HEK293 (cell line): ENCODE measurements at regions of chr1 and their contacts with region 1.

Region 1: GRCh38 chr1:29033829-29034466 is 89.8 kb downstream of the TMEM200B start:
- H3K4me3 ChIP-seq: no peak overlapping the region
- H3K27ac ChIP-seq: no peak overlapping the region
- H3K4me1 ChIP-seq: no peaks in the 10 kb centered on the region
- CTCF ChIP-seq: 0 out of 2 replicates have a peak, but pooled peaks have one; percentile 35

Region 2: GRCh38 chr1:28782011-28782410 is 251.9 kb before region 1 on chr1:
- CTCF ChIA-PET with region 1: interaction called, 14 read pairs
- POLR2A ChIA-PET with region 1: no interaction called
- H3K4me3 ChIP-seq: no peak overlapping the region
- H3K27ac ChIP-seq: no peak overlapping the region
- H3K4me1 ChIP-seq: no peaks in the 10 kb centered on the region
- CTCF ChIP-seq: no peak

Region 3: DNA sequence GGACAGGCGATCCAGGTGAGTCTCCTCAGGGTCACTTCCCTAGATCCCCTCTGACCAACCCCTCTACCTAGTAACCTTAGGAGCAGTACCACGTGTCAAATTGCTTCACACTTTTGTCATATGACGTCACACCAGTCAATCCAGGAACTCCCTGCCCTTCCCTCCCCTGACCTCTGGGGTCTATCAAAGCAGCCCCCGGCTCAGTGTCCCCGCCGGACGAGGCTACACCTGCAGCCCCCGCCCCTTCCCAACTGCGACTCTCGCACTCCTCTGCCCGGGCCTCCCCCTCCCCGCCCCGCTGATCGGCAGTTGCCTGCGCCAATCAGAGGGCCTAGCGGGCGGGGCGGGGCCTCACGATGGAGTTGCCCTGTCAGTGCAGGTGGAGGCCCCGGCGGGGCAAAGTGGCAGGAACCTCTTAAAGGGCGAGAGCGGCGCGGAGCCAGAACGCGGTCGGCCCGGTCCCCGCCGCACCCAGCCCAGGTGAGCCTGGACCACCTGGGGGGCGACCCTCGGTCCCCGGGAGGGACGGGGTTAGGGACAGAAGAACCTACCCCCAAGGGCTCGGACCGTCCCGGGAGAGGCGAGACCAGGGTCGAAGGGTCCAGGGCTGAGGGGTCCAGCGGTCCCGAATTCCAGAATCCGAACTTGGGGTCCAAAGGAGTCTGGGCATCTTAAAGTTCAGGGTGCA is 147.1 kb before region 1 on chr1:
- CTCF ChIA-PET with region 1: interaction called, 348 read pairs
- POLR2A ChIA-PET with region 1: interaction called, 4 read pairs
- H3K4me3 ChIP-seq: peak overlapping the region; percentile 89
- H3K27ac ChIP-seq: peak overlapping the region; percentile 66; the same call in 1 of the 2 replicates
- H3K4me1 ChIP-seq: peaks cover 6% of the 10 kb centered on the region
- CTCF ChIP-seq: no peak

Region 4: DNA sequence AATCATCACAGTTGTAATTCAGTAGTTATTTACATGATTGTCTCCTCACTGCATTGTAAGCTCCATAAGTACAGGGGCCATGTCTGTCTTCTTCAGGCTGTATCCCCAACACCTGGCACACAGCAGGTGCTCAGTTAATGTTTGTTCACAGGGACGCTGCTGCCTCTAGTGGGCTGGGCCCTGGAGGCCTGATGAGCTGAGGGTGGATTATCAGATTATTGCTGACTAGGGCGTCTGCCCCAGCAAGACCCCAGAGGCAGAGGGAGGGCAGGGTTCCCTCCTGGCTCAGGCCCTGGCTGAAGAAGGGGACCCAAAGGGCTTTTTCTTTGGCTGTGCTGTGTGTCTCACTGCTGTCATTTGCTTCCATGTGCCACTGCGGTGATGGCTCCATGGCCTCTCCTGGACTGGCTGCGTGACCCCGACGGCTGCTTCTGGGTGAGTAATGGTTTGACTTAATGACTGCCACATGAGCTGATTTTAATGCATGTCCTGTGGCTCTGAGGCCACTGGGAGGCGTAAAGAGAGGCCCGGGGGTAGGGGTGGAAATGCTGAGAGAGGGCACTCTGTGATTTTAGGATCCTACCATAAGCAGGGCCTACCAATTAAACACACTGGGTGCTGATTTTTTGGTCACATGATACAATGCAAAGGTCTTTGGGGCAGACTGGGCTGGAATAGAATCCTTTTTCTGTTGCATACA is 140.4 kb before region 1 on chr1:
- CTCF ChIA-PET with region 1: interaction called, 29 read pairs
- POLR2A ChIA-PET with region 1: no interaction called
- H3K4me3 ChIP-seq: no peak overlapping the region
- H3K27ac ChIP-seq: no peak overlapping the region
- H3K4me1 ChIP-seq: no peaks in the 10 kb centered on the region
- CTCF ChIP-seq: peak; percentile 70

Region 5: DNA sequence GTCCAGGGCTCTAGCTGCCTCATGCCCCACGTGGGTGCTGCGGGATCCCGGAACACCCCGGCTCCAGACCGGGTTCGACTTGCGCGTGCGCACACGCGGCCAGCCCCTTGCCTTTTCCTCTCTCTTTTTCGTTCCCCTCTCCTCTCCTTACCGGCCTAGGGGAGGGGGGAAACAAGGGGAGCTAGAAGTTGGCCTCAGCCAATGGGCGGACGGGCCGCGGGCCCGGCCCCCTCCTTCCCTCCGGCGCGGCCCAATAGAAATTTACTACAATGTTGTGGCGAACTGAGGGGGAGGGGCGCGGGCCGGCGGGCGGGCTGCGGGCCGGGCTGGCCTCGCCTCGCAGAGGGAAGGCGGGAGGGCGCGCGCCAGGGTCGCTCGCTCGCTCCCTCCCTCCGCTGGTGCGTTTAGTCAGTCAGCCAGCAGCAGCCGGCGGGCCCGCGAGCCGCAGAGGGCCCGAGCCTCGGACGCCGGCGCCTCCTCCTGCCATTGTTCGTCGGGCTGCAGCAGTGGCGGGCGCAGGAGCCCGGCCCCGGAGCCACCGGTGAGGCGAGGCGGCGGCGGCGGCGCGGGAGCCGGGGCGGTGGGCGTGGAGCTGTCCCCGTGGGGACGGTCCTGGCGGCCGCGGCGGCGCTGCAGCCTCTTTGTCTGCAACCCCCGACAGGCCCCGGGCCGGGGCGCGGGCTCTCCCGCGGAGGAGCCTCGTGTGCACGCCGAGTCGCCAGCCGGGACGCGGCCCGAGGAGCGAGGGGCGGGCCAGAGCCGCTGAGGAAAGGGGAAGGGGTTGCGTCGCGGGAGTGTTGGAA is 119.5 kb before region 1 on chr1 and contains the start of gene EPB41:
- CTCF ChIA-PET with region 1: interaction called, 10 read pairs
- POLR2A ChIA-PET with region 1: interaction called, 3 read pairs
- H3K4me3 ChIP-seq: peak within 1 kb of the TSS; percentile 47
- H3K27ac ChIP-seq: peak within 1 kb of the TSS; percentile 68; the same call in 1 of the 2 replicates
- H3K4me1 ChIP-seq: 0 out of 2 replicates have a peak, but pooled peaks cover 4% of the 10 kb centered on the region
- CTCF ChIP-seq: no peak

Region 6: GRCh38 chr1:29017975-29018712 is 15.8 kb before region 1 on chr1:
- CTCF ChIA-PET with region 1: interaction called, 12 read pairs
- POLR2A ChIA-PET with region 1: no interaction called
- H3K4me3 ChIP-seq: no peak overlapping the region
- H3K27ac ChIP-seq: no peak overlapping the region
- H3K4me1 ChIP-seq: no peaks in the 10 kb centered on the region
- CTCF ChIP-seq: no peak

Region 7: DNA sequence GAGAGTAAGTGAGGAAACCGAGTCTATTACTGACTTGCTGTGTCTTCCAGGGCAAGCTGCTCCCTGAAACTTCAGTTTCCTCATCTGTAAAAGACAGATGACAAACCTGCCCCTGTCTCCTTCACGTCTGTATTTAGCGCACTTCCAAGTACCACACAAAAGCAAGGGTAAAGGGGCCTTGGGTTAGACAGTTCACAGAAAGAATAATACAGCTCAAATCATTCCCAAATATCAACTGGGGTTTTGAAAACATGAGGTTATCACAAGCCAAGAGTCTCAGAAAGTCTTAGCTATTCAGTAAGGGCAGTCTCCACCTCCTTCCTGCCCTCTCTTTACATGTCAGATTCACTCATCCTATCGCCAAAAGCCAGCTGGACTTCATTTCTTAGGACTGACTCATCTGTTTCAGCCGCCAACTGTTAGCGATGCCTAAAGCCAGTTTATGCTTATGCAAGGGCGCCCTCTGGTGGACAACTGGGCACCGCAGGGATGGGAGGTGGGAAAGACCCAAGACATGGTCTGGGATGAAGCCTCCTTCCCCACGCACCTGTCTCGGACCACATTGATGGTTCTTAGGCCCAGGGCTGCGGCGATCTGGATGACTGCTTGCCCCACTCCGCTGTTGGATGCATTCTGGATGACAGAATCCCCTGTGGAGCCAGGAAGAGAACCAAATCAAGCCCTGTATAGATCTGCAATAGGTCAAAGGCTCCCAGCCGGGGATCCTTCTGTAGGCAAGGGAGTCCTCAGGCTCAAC is 168.8 kb after region 1 on chr1:
- CTCF ChIA-PET with region 1: interaction called, 35 read pairs
- POLR2A ChIA-PET with region 1: no interaction called
- H3K4me3 ChIP-seq: no peak overlapping the region
- H3K27ac ChIP-seq: no peak overlapping the region
- H3K4me1 ChIP-seq: no peaks in the 10 kb centered on the region
- CTCF ChIP-seq: peak; percentile 89